ENCODE measurements at regions of chr17 and their contacts with region 1.

Region 1: GRCh38 chr17:74759243-74759801 is 10.9 kb downstream of the NHERF1 start:
- DNase-seq: no peak
- ATAC-seq: peak; percentile 90
- H3K4me3 ChIP-seq: no peak overlapping the region
- H3K27ac ChIP-seq: peak overlapping the region; percentile 1
- H3K4me1 ChIP-seq: peaks cover 21% of the 10 kb centered on the region
- H3K27me3 ChIP-seq: no peaks in the 10 kb centered on the region
- CTCF ChIP-seq: peak; percentile 16 to 32 (median 30); a peak in 3 of 6 replicates
- EP300 ChIP-seq: no peak
- POLR2A ChIP-seq: no peak
- RAD21 ChIP-seq: peak; percentile 28

Region 2: GRCh38 chr17:74742153-74742515 is 17.2 kb before region 1 on chr17:
- CTCF ChIA-PET with region 1: interaction called, 33 read pairs
- POLR2A ChIA-PET with region 1: interaction called, 3 read pairs
- RAD21 ChIA-PET with region 1: interaction called, 11 read pairs
- SMC1A ChIA-PET with region 1: interaction called, 12 read pairs
- in situ Hi-C with region 1: no loop called
- intact Hi-C with region 1: no loop called
- DNase-seq: peak; percentile 69
- ATAC-seq: peak; percentile 31
- H3K4me3 ChIP-seq: no peak overlapping the region
- H3K27ac ChIP-seq: peak overlapping the region; percentile 80
- H3K4me1 ChIP-seq: peaks cover 47% of the 10 kb centered on the region
- H3K27me3 ChIP-seq: no peaks in the 10 kb centered on the region
- CTCF ChIP-seq: no peak
- EP300 ChIP-seq: 0 out of 4 replicates have a peak, but pooled peaks of 1 of the 2 experiments have one; percentile 6
- POLR2A ChIP-seq: 0 out of 2 replicates have a peak, but pooled peaks have one; percentile 43
- RAD21 ChIP-seq: no peak

Region 3: DNA sequence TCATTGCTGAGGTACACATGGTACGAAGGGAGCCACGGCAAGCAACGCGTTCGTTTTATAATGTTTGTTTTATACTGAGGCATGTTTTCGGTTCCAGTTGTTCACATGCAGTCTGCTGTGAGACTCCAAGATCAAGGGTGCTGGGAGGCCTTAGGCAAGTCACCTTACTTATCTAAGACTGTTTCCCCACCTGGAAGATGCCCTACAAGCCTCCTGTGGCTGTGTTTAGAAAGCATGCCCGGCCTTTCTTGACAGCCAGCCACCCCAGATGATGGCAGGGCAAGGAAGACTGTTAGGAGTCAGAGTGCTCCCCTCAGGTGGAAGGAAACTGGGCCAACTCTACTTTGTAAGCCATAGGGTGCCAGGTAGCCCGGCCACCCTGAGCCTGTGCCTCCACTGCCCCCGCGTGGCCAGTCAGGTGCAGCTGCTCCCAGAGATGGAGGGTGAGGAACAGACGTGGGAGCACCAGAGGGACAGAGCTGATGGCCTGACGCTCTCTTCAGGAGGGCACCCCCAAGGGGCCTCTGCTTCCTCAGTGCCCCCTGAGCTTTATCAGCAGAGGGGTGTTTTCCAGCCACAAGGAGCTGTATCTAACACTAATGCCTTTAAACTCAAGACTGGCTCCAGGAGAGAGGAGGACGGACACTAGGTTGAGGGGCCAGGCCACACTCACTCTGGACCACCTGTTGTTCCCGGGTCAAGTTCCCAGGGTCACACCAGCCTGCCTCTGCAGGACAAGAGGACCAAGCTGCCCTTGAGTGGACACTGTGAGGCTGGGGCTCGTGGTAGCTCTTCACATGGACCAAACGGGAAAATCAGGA is 11.4 kb after region 1 on chr17:
- CTCF ChIA-PET with region 1: interaction called, 20 read pairs
- POLR2A ChIA-PET with region 1: interaction called, 12 read pairs
- RAD21 ChIA-PET with region 1: interaction called, 3 read pairs
- SMC1A ChIA-PET with region 1: interaction called, 3 read pairs
- in situ Hi-C with region 1: no loop called
- intact Hi-C with region 1: no loop called
- DNase-seq: no peak
- ATAC-seq: peak; percentile 90
- H3K4me3 ChIP-seq: no peak overlapping the region
- H3K27ac ChIP-seq: no peak overlapping the region
- H3K4me1 ChIP-seq: 0 out of 2 replicates have a peak, but pooled peaks cover 3% of the 10 kb centered on the region
- H3K27me3 ChIP-seq: no peaks in the 10 kb centered on the region
- CTCF ChIP-seq: peak; percentile 81 to 85 (median 82)
- EP300 ChIP-seq: no peak
- POLR2A ChIP-seq: peak; percentile 33; the same call in 1 of the 2 replicates
- RAD21 ChIP-seq: peak; percentile 88

Region 4: DNA sequence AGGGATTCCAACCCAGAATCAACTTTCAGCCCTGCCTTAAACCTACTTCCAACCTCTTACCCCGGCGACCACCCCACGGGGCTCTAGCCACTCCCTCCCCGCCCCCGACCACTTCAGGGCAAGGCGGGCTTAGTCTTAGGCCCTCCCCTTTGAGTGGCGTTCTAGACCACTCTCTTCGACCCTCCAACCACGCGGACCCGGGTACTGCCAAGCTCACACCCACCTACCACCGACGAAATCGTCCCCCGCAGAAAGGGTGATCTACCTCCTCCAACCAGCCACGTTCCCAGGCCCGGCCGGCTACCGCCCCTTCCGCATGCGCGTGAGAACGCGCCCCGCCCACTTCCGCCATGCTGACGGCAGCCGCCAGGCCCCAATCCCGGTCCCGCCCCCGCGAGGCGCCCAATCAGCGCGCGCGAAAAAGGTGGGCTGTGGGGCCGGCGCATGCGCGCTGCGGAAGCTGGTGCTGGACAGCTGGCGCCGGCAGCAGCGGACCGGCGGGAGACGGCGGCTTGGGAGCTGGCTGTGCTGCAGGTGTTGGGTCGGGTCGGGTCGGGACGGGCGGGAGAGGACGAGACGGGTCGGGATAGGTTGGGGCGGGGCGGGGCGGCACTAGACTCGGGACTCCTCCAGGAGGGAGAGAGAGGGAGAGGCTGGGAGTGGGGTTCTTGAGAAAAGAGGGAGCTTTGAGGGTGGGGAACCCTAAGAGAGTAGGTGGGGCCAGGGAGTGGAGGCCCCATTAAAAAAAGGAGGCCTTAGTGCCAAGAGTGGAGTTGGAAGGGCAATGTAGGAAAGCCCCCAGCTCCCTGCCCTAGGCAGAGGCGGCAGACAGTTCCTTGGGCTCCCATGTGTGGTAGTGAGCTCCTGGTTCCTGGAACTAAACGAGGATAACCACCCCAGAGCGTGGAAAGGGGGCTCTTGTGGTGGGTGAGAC is 17.0 kb after region 1 on chr17 and contains the start of gene NAT9:
- CTCF ChIA-PET with region 1: interaction called, 20 read pairs
- POLR2A ChIA-PET with region 1: interaction called, 12 read pairs
- RAD21 ChIA-PET with region 1: interaction called, 3 read pairs
- SMC1A ChIA-PET with region 1: interaction called, 3 read pairs
- in situ Hi-C with region 1: no loop called
- intact Hi-C with region 1: no loop called
- DNase-seq: peak; percentile 82
- ATAC-seq: peak; percentile 91
- H3K4me3 ChIP-seq: peak within 1 kb of the TSS; percentile 73
- H3K27ac ChIP-seq: peak within 1 kb of the TSS; percentile 59
- H3K4me1 ChIP-seq: peaks cover 28% of the 10 kb centered on the region
- H3K27me3 ChIP-seq: no peaks in the 10 kb centered on the region
- CTCF ChIP-seq: no peak
- EP300 ChIP-seq: no peak
- POLR2A ChIP-seq: peak; percentile 89
- RAD21 ChIP-seq: no peak
- polyA plus RNA-seq, gene NAT9: 3.5 to 4.5 TPM